MCF 10A (cell line): ENCODE measurements at regions of chr15 and their contacts with region 1.

Region 1: GRCh38 chr15:44102675-44103254 is 92.3 kb downstream of the FRMD5 start:
- DNase-seq: peak; percentile 77
- H3K4me3 Mint-ChIP-seq: no peak overlapping the region
- H3K27ac Mint-ChIP-seq: peak overlapping the region; percentile 43
- H3K4me1 Mint-ChIP-seq: peaks cover 27% of the 10 kb centered on the region
- H3K27me3 Mint-ChIP-seq: no peaks in the 10 kb centered on the region
- CTCF ChIP-seq: no peak

Region 2: GRCh38 chr15:44075535-44075934 is 27.2 kb before region 1 on chr15:
- CTCF ChIA-PET with region 1: interaction called, 3 read pairs
- POLR2A ChIA-PET with region 1: interaction called, 3 read pairs
- intact Hi-C with region 1: loop called (anchors 1 kb)
- DNase-seq: peak; percentile 34
- H3K4me3 Mint-ChIP-seq: peak overlapping the region; percentile 35
- H3K27ac Mint-ChIP-seq: peak overlapping the region; percentile 95
- H3K4me1 Mint-ChIP-seq: peaks cover 9% of the 10 kb centered on the region
- H3K27me3 Mint-ChIP-seq: no peaks in the 10 kb centered on the region
- CTCF ChIP-seq: no peak

Region 3: DNA sequence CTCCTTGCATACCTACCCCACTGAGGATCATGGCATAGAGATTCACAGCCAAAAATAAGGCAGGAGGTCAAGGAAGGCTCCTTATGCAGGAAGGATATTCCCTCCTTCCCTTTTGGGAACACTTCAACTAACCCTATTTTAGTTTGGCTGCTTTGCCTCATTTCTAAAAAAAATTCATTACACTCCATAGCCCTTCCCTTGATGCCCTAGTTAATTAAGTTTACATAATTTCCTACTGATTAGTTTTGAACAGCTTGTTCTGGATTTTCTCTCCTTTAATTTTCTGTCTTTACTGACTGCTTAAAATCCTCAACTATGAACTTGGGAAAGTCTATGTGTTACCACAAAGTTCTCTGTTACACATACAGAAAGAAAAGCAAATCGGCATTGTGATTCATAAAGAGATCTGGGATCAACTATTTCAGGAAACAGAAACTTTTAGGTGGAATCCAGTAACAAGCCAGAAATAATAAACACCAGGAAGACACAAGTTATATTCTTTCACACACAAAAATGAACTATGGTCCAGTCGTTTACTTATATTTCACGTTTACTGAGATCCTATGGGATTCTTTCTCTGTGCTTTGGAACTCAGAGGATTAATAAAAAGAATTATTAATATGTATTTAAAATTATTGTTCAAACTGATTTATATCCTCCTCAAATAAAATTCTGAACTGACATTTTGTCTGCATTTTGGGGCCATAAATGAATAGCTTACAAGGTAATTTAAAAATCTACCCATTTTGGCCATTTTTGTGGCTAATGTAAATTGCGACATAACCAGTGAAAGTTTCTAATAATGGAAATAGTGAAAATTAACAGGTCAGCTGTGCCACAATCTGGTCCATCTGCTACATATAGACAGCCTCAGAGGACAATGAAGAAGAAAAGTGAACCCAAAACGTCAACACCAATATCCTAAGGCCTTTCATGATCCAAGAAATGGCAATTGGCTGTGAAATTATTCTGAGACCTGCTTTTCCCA is 21.4 kb before region 1 on chr15:
- CTCF ChIA-PET with region 1: interaction called, 3 read pairs
- POLR2A ChIA-PET with region 1: interaction called, 15 read pairs
- intact Hi-C with region 1: no loop called
- DNase-seq: no peak
- H3K4me3 Mint-ChIP-seq: no peak overlapping the region
- H3K27ac Mint-ChIP-seq: peak overlapping the region; percentile 65
- H3K4me1 Mint-ChIP-seq: peaks cover 7% of the 10 kb centered on the region
- H3K27me3 Mint-ChIP-seq: no peaks in the 10 kb centered on the region
- CTCF ChIP-seq: no peak

Region 4: DNA sequence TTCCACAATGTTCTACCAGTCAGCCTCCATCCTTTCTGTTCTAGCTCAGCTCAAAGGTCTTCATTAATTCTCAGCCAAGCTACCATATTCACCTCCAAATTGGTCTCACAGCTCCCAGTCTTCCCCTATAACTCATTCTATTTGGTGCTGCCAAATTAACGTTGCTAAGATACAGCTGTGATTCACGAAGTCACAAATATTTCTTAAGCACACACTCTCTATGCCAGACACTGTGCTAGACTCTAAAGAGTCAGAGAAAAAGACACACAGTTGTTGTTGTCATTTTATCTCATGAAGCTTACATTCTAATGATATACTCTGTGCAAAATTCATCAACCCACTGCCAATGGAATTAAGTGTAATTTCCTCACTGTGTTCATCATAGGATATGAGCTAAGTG is 10.5 kb before region 1 on chr15:
- CTCF ChIA-PET with region 1: interaction called, 3 read pairs
- POLR2A ChIA-PET with region 1: interaction called, 17 read pairs
- intact Hi-C with region 1: no loop called
- DNase-seq: peak; percentile 42
- H3K4me3 Mint-ChIP-seq: no peak overlapping the region
- H3K27ac Mint-ChIP-seq: peak overlapping the region; percentile 3
- H3K4me1 Mint-ChIP-seq: peaks cover 23% of the 10 kb centered on the region
- H3K27me3 Mint-ChIP-seq: no peaks in the 10 kb centered on the region
- CTCF ChIP-seq: no peak

Region 5: DNA sequence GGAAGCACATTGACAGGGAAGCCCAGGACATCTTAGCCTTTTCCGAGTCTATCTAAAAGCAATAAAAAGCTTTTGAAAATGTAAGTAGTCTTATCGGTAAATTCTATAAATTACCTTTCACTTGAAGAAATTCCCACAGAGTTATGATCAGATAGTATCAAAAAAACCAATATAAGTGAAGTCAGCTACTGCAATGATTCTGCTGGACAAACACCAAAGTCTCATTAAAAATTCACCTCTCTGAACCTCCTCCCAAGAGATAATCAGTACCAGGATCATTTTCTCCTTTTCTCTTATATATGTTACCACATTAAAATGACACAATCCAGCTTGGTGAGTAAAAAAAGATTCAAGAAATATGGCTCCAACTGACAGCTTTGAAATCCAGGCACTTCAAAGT is 23.1 kb after region 1 on chr15:
- CTCF ChIA-PET with region 1: no interaction called
- POLR2A ChIA-PET with region 1: no interaction called
- intact Hi-C with region 1: no loop called
- DNase-seq: no peak
- H3K4me3 Mint-ChIP-seq: no peak overlapping the region
- H3K27ac Mint-ChIP-seq: no peak overlapping the region
- H3K4me1 Mint-ChIP-seq: no peaks in the 10 kb centered on the region
- H3K27me3 Mint-ChIP-seq: no peaks in the 10 kb centered on the region
- CTCF ChIP-seq: no peak

Region 6: DNA sequence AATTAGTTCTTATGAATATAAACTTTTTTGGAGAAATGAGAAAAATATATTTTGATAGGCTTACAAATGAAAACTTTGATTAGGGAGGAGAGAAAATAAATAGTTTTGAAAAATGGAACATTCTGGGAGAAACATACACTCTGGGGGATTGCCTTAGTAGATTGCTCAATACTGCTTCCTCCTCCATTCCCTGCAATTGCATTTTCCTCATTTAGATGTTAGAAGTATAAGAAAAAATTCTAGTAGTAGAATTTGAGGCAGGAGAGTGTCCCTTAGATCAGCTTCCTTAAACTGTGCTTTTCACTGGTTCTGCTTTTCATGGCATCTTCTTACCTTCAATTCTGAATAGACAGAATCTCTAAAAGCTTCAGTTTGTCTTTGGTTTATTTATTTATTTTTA is 278.5 kb after region 1 on chr15:
- CTCF ChIA-PET with region 1: no interaction called
- POLR2A ChIA-PET with region 1: no interaction called
- intact Hi-C with region 1: no loop called
- DNase-seq: no peak
- H3K4me3 Mint-ChIP-seq: no peak overlapping the region
- H3K27ac Mint-ChIP-seq: no peak overlapping the region
- H3K4me1 Mint-ChIP-seq: no peaks in the 10 kb centered on the region
- H3K27me3 Mint-ChIP-seq: no peaks in the 10 kb centered on the region
- CTCF ChIP-seq: no peak